Posterior vena cava (tissue), 2 donors: ENCODE measurements at regions of chr5 and their contacts with region 1.

Region 1: DNA sequence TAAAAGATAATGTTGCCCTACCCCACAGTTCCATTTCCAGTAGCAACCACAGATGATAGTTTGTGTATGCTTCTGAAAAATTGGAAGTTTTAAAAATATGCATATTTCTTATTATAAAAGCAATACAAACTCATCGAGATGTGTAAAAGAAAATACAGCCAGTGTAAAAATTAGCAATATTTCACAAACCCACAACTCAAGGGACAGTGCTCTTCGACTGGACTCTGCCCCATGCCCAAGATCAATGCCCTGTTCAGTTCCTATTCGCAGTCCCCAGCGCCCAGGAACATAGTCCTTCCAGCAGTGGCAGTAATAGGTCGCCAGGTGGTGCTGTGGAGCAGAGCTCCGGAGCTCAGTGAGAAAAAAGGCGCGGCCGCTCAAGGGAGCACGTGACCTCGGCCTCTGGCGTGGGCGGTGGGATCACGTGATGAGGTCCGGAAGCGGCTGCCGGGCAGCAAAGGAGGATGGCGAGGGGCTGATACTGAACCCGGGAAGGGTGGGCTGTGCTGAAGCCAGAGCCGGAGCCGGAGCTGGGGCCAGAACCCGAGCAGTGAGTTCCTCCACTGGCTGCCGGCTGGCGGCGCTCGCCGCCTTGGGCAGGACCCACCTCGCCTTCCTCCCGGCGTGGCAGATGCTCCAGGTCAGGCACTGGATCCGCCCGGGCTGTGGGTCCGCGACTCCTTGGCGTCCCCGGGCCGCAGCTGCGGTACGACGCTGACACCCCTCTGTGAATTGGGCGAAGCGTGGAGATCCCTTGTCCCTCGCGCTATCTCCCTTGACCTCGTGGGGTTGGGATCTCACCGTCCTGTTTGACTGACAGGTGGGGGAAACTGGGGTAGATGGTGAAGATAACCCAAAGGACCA is at the start of gene SLC36A1:
- DNase-seq: peak; percentile 99
- total RNA-seq, gene SLC36A1: 15.3 to 15.6 TPM

Region 2: GRCh38 chr5:151509231-151509630 is 61.8 kb after region 1 on chr5:
- intact Hi-C with region 1: loop called (anchors 2 to 10 kb)
- DNase-seq: no peak

Region 3: DNA sequence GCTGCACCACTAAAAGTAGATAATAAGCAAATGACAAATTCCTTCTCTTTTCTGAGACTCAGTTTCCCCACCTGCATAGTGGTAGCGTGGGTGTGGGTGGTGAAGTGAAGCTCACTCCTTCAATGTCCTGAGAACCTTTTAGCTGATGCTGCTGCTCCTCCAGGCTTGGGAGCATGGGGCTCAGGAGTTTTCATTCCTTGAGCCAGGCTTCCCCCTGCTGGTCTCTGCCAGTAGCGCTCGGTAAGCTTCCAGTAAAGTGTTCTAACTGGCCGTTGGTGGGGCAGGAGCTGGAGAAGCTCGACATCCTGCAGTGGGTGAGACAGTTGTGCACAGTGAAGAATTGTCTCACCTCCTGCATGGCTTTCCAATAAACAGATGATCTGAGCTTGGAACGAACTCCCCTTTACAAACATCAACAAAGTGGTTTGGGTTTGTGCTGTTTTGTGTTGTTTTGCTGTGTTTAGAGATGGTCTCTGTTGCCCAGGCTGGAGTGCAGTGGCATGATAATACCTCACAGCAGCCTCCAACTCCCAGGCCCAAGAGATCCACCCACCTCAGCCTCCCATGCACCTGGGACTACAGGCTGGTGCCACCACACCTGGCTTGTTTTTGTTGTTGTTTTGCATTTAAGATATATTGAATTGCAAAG is 204.7 kb after region 1 on chr5:
- intact Hi-C with region 1: loop called (anchors 5 to 10 kb)
- DNase-seq: peak; percentile 93

Region 4: DNA sequence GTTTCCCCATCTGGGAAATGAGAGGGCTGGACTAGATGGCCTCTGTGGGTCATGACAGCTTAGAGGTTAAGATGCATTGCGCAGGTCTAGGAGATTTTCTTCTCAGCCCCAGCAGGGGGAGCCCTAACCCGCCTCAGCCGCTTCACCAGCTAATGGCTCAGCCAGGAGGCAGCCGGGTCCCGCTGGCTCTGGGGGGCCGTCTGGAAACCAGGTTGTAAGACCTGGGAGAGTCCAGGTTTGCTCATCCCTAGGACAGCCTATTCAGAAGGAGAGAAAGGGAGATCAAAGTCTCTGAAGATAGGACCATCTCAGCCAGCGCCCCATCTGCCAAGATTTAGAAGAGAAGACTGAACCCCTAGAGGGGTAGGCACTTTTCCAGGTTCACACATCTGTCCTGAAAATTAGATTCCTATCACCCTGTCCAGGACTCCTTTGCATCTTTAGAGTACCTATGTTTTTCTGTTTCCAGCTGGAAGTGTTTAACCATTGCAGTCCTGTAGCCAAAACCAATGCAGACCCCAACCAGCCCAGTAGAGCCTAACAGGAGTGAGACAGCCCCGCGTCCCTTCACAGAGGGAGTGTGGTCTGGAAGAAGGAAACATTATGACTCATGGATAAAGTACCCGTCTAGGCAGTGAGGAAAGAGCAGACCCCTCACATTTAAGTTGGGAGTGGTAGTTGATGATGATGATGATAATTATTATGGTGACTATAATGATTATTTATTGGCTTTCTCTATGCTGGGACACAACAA is 211.8 kb after region 1 on chr5:
- intact Hi-C with region 1: loop called (anchors 5 to 10 kb)
- DNase-seq: peak; percentile 96

Region 5: DNA sequence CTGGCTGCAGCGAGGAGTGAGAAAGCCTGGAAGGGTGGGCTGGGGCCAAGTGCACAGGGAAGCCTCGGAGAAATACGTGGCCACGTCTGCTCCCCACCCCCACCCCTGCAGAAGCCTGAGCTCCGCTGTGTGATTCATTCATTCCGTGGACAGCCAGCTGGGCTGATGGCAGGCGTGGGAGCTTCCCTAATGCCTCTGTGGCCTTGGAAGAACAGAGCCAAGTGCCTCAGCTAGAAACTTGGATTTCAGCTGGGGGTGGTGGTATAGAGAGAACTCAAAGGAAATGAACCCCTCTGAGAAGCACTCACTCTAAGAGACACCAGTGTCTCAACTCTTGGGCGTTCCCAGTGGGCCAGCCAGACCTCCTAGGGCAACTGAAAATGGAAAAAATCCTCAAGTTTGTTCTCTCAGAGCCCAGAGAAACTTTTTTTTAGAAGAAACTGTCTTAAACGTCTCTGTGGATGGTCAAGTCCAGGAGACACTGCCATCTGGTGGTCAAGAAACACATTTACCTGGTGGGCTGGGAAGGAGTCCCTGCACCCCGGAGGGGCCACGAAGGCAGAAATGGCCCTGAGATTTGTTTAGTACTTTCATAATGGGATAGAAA is 293.0 kb after region 1 on chr5:
- intact Hi-C with region 1: loop called in 1 of 2 experiments (anchors 10 kb)
- DNase-seq: peak; percentile 92

Region 6: GRCh38 chr5:151912360-151912759 is 465.0 kb after region 1 on chr5:
- intact Hi-C with region 1: no loop called
- DNase-seq: no peak